ENCODE measurements at regions of chr1 and their contacts with region 1.

Region 1: GRCh38 chr1:113042285-113043143 is 30.5 kb upstream of the LRIG2 start:
- DNase-seq: peak; percentile 84
- H3K4me3 ChIP-seq: no peak overlapping the region
- H3K27ac ChIP-seq: peak overlapping the region; percentile 79
- H3K4me1 ChIP-seq: peaks cover 31% of the 10 kb centered on the region
- H3K27me3 ChIP-seq: no peaks in the 10 kb centered on the region
- CTCF ChIP-seq: peak; percentile 41 to 71

Region 2: DNA sequence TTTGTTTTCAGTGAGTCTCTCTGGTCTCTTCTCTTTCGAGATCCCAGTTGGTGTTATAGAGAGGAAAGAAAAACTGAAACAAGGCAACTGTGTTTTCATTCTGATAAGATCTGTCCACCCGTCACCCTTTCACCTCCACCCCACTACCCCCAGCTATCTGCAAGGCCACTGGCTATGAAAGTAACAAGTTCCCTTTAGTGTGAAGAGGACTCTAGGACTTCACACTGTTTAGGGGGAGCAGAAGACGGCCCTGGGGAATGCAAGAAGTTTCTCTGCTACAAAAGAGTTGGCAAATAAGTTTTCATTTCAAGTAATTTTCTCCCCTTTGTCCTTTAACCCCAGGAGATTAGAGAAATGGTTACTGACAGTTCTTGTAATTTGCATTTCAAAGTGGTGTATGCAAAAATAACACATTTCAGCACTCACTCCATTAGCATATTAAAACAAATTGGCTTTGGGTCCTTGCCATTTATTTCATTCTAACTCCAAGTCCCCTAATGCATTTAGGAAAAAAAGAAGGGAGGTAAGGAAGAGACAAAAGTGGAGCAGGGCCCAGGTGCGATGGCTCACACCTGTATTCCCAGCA is 247.8 kb before region 1 on chr1:
- CTCF ChIA-PET with region 1: no interaction called
- dilution Hi-C with region 1: loop called (anchors 5 kb)
- in situ Hi-C with region 1: no loop called
- intact Hi-C with region 1: no loop called
- DNase-seq: no peak
- H3K4me3 ChIP-seq: no peak overlapping the region
- H3K27ac ChIP-seq: no peak overlapping the region
- H3K4me1 ChIP-seq: peaks cover 7% of the 10 kb centered on the region
- H3K27me3 ChIP-seq: no peaks in the 10 kb centered on the region
- CTCF ChIP-seq: no peak

Region 3: GRCh38 chr1:112809253-112809684 is 233.2 kb before region 1 on chr1:
- CTCF ChIA-PET with region 1: interaction called, 4 read pairs
- dilution Hi-C with region 1: no loop called
- in situ Hi-C with region 1: loop called (anchors 5 to 10 kb)
- intact Hi-C with region 1: loop called (anchors 1 kb)
- DNase-seq: peak; percentile 62
- H3K4me3 ChIP-seq: no peak overlapping the region
- H3K27ac ChIP-seq: no peak overlapping the region
- H3K4me1 ChIP-seq: peaks cover 9% of the 10 kb centered on the region
- H3K27me3 ChIP-seq: no peaks in the 10 kb centered on the region
- CTCF ChIP-seq: peak; percentile 95 to 96

Region 4: DNA sequence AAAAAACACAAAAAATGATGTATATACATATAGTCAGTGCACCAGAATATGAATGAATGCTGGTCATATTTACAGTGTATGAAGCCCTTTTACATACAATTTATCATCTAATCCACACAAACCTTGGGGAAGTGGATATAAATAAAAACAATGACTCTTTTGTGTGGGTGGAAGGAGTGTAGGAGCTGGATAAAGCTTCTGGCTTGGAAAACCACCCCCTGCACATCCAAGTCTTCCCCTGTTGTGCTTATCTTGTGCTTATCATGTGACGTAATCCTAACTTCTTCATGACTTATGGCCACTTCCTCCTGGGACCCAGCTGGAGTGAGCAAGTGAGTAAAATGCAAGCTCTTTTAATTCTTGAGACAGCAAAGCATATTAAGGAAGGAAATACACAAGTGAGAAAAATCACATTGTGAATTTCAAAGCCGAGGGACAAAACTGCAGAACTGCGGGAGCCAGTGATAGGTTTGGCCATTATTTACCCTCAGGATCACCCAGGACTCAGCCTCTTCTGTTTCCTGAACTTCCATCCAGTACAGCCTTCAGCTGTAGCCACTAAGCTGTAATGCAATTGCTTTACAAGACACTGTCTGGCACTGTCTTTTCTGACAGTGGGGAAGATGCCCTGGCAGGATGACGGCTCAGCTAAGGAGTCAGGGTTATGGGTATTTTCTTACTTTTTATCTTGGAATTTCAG is 223.4 kb before region 1 on chr1:
- CTCF ChIA-PET with region 1: no interaction called
- dilution Hi-C with region 1: no loop called
- in situ Hi-C with region 1: loop called in 1 of 2 experiments (anchors 10 kb)
- intact Hi-C with region 1: no loop called
- DNase-seq: no peak
- H3K4me3 ChIP-seq: no peak overlapping the region
- H3K27ac ChIP-seq: no peak overlapping the region
- H3K4me1 ChIP-seq: no peaks in the 10 kb centered on the region
- H3K27me3 ChIP-seq: no peaks in the 10 kb centered on the region
- CTCF ChIP-seq: no peak

Region 5: GRCh38 chr1:112950426-112950825 is 92.1 kb before region 1 on chr1:
- CTCF ChIA-PET with region 1: interaction called, 17 read pairs
- dilution Hi-C with region 1: loop called (anchors 5 kb)
- in situ Hi-C with region 1: loop called in 1 of 2 experiments (anchors 5 kb)
- intact Hi-C with region 1: loop called (anchors 1 kb)
- DNase-seq: no peak
- H3K4me3 ChIP-seq: no peak overlapping the region
- H3K27ac ChIP-seq: no peak overlapping the region
- H3K4me1 ChIP-seq: peaks cover 11% of the 10 kb centered on the region
- H3K27me3 ChIP-seq: no peaks in the 10 kb centered on the region
- CTCF ChIP-seq: no peak

Region 6: DNA sequence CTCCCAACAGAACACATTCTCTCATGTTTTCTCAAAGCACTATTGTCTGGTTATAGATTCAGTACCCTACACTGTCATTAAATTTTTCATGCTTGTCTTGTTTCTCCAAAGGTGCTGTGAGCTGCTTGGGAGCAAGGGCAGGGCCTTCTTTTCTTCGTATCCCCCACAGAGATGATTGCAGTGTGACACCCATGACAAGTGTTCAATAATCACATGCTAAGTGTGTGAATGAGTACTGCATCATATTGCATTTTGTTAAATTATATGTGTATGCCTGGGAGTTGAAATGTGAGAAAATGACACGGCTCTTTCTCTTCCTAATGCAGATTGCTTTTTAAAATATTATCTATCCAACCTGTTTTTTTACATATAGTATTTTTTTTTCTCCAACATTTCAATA is 290.5 kb after region 1 on chr1:
- CTCF ChIA-PET with region 1: no interaction called
- dilution Hi-C with region 1: no loop called
- in situ Hi-C with region 1: no loop called
- intact Hi-C with region 1: no loop called
- DNase-seq: no peak
- H3K4me3 ChIP-seq: no peak overlapping the region
- H3K27ac ChIP-seq: no peak overlapping the region
- H3K4me1 ChIP-seq: no peaks in the 10 kb centered on the region
- H3K27me3 ChIP-seq: no peaks in the 10 kb centered on the region
- CTCF ChIP-seq: no peak

Measured in mammary epithelial cell (primary cell).